Sigmoid colon (tissue), 7 donors: ENCODE measurements at regions of chr16 and their contacts with region 1.

Region 1: GRCh38 chr16:14364386-14365204 is 265.5 kb downstream of the PARN start:
- DNase-seq: no peak
- H3K4me3 ChIP-seq: no peak overlapping the region
- H3K27ac ChIP-seq: peak overlapping the region in 2 of 4 donors; percentile 2 to 82
- H3K4me1 ChIP-seq: peaks cover 0 to 27% (median 23%) of the 10 kb centered on the region in 4 donors
- H3K27me3 ChIP-seq: no peaks in the 10 kb centered on the region
- CTCF ChIP-seq: no peak
- EP300 ChIP-seq: no peak
- POLR2A ChIP-seq: no peak

Region 2: DNA sequence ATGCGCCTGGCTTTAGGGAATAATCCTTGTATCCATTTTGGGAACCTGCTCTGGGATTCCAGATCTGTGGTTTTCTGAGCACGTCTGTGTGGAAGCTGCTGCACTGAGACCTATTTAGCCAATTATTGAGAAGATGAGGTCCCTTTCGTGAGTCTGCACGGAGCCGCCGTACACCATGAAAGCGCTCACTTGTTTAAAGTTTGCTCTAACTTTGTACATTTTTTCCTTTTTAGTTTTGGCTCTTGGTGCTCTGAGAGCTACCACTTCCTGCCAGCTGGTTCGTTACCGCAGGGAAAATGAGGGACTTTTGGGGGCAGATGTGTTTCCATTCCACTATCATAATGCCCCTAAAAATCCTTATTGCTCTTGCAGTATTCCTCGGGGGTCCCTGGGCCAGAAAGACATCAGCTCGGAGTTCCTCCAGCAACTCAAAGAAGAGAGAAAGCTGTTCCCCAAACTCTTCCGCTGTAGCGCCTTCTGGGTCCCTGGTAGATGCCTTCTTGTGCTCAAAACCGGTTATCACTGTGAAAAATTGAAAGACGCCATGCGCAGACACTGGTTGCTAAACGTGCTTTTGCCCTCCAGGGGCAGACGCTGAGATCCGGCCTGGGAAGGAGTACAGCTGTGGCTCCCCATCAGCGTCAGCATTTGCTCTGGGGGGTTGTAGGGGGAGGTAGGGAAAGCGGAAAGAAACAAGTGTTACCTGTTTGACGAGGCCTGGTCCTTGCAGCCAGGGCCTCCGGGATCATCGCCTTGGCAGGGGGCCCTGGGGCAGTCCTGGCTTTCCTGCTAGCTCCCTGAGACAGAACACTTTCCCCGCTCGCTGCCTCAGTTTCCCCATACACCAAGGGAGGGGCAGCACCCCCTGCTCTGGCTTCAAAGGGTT is 55.4 kb before region 1 on chr16:
- intact Hi-C with region 1: loop called (anchors 2 kb)
- DNase-seq: no peak
- H3K4me3 ChIP-seq: peak overlapping the region in 2 of 4 donors; percentile 3 to 5
- H3K27ac ChIP-seq: peak overlapping the region; percentile 52 to 92 (median 83)
- H3K4me1 ChIP-seq: peaks cover 0 to 80% (median 72%) of the 10 kb centered on the region in 4 donors
- H3K27me3 ChIP-seq: no peaks in the 10 kb centered on the region
- CTCF ChIP-seq: peak in 1 of 4 experiments; percentile 25
- EP300 ChIP-seq: no peak
- POLR2A ChIP-seq: no peak

Region 3: GRCh38 chr16:14378684-14379467 is 14.3 kb after region 1 on chr16:
- intact Hi-C with region 1: no loop called
- DNase-seq: no peak
- H3K4me3 ChIP-seq: no peak overlapping the region
- H3K27ac ChIP-seq: no peak overlapping the region
- H3K4me1 ChIP-seq: no peaks in the 10 kb centered on the region
- H3K27me3 ChIP-seq: no peaks in the 10 kb centered on the region
- CTCF ChIP-seq: no peak
- EP300 ChIP-seq: no peak
- POLR2A ChIP-seq: no peak

Region 4: GRCh38 chr16:14486520-14487303 is 122.1 kb after region 1 on chr16:
- intact Hi-C with region 1: loop called (anchors 5 kb)
- DNase-seq: peak; percentile 94
- H3K4me3 ChIP-seq: peak overlapping the region; percentile 6 to 41 (median 34)
- H3K27ac ChIP-seq: peak overlapping the region; percentile 75 to 79 (median 78)
- H3K4me1 ChIP-seq: peaks cover 0 to 22% (median 19%) of the 10 kb centered on the region in 4 donors
- H3K27me3 ChIP-seq: no peaks in the 10 kb centered on the region
- CTCF ChIP-seq: no peak
- EP300 ChIP-seq: peak in 2 of 4 donors; percentile 38 to 46
- POLR2A ChIP-seq: no peak